ENCODE measurements at regions of chr17 and their contacts with region 1.

Region 1: DNA sequence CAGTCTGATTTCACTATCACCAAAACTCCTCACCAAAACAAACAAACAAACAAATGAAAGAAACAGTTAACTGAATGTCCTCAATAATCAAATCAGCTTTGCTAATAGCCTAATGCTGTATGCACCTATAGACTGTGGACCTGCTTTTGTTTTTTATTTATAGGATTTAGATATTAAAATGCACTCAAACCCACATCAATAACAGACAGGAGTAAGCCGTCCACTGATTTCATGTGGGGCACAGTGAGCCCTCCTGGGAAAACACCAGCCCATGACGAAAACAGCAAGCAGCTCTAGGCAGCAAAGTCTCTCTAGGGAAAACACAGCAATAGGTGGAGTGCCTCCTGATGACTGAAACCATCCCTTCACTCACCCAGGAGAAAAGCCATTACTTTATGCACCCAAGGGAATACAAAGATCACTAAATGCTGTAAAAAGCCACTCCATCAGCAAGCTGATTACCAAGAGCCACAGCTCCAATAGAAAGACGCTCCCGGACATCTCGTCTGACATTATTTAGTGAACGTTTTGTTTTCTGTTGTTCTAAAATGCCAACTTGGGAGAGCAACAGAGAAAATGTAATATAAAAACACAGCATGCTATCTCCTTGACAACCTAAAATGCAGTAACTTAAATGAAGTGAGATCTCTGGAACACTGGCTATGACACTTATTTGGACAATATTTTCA is 47.8 kb downstream of the ANKFY1 start:
- DNase-seq: peak; percentile 26
- H3K4me3 ChIP-seq: no peak overlapping the region
- H3K27ac ChIP-seq: peak overlapping the region in 3 of 4 donors; percentile 35 to 44 (median 40)
- H3K4me1 ChIP-seq: peaks cover 29 to 45% (median 37%) of the 10 kb centered on the region in 4 donors
- H3K27me3 ChIP-seq: no peaks in the 10 kb centered on the region
- CTCF ChIP-seq: no peak
- EP300 ChIP-seq: no peak
- POLR2A ChIP-seq: no peak

Region 2: GRCh38 chr17:4195306-4195705 is 20.7 kb before region 1 on chr17:
- intact Hi-C with region 1: no loop called
- DNase-seq: no peak
- H3K4me3 ChIP-seq: no peak overlapping the region
- H3K27ac ChIP-seq: peak overlapping the region in 2 of 4 donors; percentile 17 to 35
- H3K4me1 ChIP-seq: peaks cover 0 to 7% (median 2%) of the 10 kb centered on the region in 4 donors
- H3K27me3 ChIP-seq: no peaks in the 10 kb centered on the region
- CTCF ChIP-seq: no peak
- EP300 ChIP-seq: no peak
- POLR2A ChIP-seq: no peak

Region 3: DNA sequence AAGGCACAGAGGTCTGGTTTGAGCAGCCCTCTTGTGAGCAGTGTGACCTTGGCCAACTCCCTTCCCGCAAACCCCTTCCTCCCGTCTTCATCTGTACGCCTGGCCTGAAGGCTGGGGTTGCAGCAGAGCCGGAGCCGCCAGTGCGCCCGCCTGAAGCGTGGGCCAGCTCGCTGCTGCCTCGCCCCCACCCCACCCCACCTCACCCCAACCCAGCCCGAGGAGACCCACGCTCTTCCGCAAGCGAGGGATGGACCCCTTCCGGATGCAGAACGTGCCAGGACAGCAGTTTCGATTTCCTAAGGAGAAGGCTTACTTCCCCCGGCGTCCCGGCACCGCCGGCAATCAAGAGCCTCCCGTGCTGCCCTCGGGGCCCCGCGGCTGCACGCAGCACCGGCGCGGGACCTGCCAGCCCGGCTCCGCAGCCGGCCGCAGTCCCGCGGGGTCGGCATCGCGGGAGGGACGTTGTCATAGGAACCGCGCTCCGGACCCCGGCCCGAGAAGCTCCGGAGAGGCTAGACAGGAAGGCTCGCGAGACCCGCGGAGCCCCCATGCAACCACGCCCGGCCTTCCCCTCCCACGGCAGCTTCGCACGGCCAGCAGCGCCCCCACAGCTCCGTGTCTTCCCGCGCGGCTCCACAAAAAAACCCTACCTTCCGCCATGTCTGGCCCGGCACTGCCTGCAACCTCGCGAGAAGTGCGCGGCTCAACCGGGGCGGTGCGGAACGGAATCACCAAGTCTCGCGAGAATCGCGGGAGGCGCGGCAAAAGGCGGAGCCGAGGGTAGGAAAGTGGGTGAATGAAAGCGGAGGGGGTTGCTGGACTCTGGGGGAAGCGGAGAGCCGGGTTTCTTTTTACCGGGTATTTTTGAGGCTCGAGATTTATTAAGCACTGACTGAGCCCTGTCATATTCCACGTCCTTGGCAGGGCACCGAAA is 47.5 kb after region 1 on chr17 and contains the start of gene ANKFY1:
- intact Hi-C with region 1: loop called (anchors 1 kb)
- DNase-seq: peak; percentile 98
- H3K4me3 ChIP-seq: peak within 1 kb of the TSS; percentile 92 to 100 (median 96)
- H3K27ac ChIP-seq: peak within 1 kb of the TSS; percentile 86 to 89 (median 88)
- H3K4me1 ChIP-seq: peaks cover 14 to 36% (median 34%) of the 10 kb centered on the region in 4 donors
- H3K27me3 ChIP-seq: no peaks in the 10 kb centered on the region
- CTCF ChIP-seq: peak in 2 of 3 experiments; percentile 12 to 46
- EP300 ChIP-seq: no peak
- POLR2A ChIP-seq: peak; percentile 40
- total RNA-seq, gene ANKFY1: 28.2 to 41.0 (median 36.7) TPM

Region 4: DNA sequence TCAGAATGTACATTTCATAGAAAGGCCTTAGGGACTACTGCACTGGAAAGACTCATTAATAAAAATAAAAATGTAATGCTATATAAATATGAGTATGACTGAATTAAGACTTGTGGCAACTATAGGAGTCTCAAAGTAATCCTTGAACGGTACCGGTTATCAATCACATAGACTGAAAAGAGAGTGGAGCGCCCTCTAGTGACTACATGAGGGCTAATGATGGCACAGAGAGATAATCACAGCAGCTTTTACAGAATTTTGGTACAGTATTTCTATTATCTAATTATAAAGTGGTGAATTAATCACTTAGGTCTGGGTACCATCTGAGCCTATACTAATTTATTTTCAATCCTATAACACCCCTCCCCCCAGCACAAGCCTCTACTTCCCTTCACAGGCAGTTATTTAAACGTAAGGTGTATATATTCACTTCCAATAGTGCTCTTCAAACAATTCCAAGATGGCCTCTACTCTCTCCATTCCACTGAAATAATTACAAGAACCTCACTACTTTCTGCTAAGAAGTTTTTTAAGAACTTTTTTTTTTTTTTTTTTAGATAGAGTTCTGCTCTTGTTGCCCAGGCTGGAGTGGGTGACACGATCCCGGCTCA is 88.5 kb after region 1 on chr17:
- intact Hi-C with region 1: loop called (anchors 2 kb)
- DNase-seq: no peak
- H3K4me3 ChIP-seq: no peak overlapping the region
- H3K27ac ChIP-seq: peak overlapping the region in 1 of 4 donors; percentile 21
- H3K4me1 ChIP-seq: peaks cover 26 to 63% (median 47%) of the 10 kb centered on the region in 4 donors
- H3K27me3 ChIP-seq: no peaks in the 10 kb centered on the region
- CTCF ChIP-seq: peak; percentile 56 to 74 (median 64)
- EP300 ChIP-seq: no peak
- POLR2A ChIP-seq: no peak